A549 (cell line): ENCODE measurements at regions of chr2 and their contacts with region 1.

Region 1: GRCh38 chr2:219352448-219353023 is 20.0 kb upstream of the RESP18 start:
- DNase-seq: peak; percentile 62 to 68
- ATAC-seq: peak; percentile 79 to 92
- H3K4me3 ChIP-seq: no peak overlapping the region
- H3K27ac ChIP-seq: no peak overlapping the region
- H3K4me1 ChIP-seq: peaks cover 1% of the 10 kb centered on the region; the same call in 2 of the 3 replicates
- CTCF ChIP-seq: peak; percentile 66
- EP300 ChIP-seq: no peak
- POLR2A ChIP-seq: no peak
- RAD21 ChIP-seq: peak; percentile 58 to 61

Region 2: DNA sequence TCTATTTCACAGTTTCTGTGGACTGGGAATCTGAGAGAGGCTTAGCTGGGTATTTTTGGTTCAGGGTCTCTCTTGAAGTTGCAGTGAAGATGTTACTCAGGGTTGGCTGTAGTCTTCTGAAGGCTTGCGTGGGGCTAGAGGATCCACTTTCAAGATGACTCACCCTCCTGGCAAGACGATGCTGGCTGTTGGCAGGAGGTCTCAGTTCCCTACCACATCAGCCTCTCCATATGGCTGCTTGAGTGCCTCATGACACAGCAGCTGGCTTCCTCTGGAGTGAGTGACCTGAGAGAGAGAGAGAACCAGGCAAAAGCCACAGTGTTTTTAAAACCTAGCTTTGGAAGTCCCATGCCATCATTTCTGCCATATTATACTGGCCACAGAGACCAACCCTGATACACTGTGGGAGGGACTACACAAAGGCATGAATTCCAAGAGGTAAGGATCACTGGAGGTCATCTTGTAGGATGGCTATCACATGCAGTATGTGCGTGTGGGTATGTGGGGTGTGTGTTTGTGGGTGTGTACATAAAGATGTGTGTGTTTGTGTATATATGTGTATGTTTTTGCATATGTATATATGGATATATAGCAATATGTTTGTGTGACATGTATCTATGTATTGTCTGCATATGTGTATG is 10.1 kb after region 1 on chr2:
- CTCF ChIA-PET with region 1: interaction called, 10 read pairs
- POLR2A ChIA-PET with region 1: no interaction called
- DNase-seq: peak in 1 of 2 experiments; percentile 60
- ATAC-seq: peak; percentile 72 to 84
- H3K4me3 ChIP-seq: no peak overlapping the region
- H3K27ac ChIP-seq: no peak overlapping the region
- H3K4me1 ChIP-seq: peaks cover 19% of the 10 kb centered on the region
- CTCF ChIP-seq: no peak
- EP300 ChIP-seq: no peak
- POLR2A ChIP-seq: no peak
- RAD21 ChIP-seq: no peak